ENCODE measurements at regions of chr2 and their contacts with region 1.

Region 1: DNA sequence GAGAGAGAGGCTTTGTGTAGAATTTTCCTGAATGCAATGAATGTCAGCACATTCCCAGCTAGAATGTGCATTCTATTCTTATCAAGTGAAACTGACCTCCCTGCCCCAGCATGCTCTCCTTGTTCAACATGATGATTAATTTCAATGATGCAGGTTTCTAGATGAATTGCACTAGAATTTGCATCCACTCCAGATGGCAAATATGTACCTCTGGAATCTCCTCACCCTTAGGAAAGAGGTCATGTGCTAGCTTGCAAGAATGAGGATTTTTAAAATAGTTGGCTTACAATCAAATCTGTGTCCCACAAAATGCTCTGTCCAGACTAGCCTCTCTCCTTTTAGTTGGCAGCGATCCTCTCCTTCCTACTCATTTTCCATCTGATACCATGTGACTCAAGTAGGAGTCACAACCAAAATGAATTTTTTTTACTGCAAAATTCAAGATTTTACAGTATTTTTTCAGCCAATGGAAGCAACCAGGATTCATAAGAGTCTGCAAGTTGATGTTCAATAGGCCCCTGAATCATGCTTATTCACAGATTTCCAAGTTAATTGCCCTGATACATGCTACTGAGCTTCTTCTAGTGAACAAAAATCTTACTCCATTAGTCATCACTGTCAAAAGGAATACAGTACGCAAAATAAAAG is 21.0 kb upstream of the STAT4 start:
- DNase-seq: peak; percentile 33 to 85
- H3K4me3 ChIP-seq: no peak overlapping the region
- H3K27ac ChIP-seq: peak overlapping the region; percentile 91
- H3K4me1 ChIP-seq: peaks cover 61% of the 10 kb centered on the region
- H3K27me3 ChIP-seq: no peaks in the 10 kb centered on the region
- CTCF ChIP-seq: no peak

Region 2: DNA sequence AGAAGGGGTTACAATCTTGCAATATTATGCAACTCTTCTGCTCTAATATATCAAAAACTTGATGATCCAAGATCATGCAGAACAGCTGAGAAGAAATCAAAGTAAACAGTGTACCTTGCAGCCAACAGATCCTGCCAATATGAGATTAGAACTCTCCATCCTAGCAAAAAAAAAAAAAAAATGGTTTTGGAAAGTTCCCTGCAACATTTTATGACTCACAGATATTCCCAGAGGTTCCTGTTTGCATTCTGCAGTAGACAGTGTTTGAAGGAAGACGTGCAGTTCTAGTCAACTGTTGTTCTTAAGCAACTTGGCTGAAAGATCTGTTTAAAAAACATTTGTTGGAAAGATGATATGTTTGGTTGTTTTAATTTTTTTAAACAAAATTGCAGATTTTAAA is 1834.2 kb before region 1 on chr2:
- CTCF ChIA-PET with region 1: no interaction called
- POLR2A ChIA-PET with region 1: no interaction called
- intact Hi-C with region 1: no loop called
- DNase-seq: no peak
- H3K4me3 ChIP-seq: no peak overlapping the region
- H3K27ac ChIP-seq: no peak overlapping the region
- H3K4me1 ChIP-seq: no peaks in the 10 kb centered on the region
- H3K27me3 ChIP-seq: no peaks in the 10 kb centered on the region
- CTCF ChIP-seq: no peak

Region 3: GRCh38 chr2:191349990-191350389 is 178.2 kb after region 1 on chr2:
- CTCF ChIA-PET with region 1: no interaction called
- POLR2A ChIA-PET with region 1: interaction called, 15 read pairs
- intact Hi-C with region 1: no loop called
- DNase-seq: no peak
- H3K4me3 ChIP-seq: no peak overlapping the region
- H3K27ac ChIP-seq: no peak overlapping the region
- H3K4me1 ChIP-seq: peaks cover 12% of the 10 kb centered on the region
- H3K27me3 ChIP-seq: no peaks in the 10 kb centered on the region
- CTCF ChIP-seq: no peak

Measured in PC-9 (cell line).